Activated CD4-positive, alpha-beta T cell treated with anti-CD3 and anti-CD28 coated beads, Interleukin-2, amount 10 ng/mL, durations not matched to agents 24 days and 14 days (primary cell): ENCODE measurements at regions of chr4 and their contacts with region 1.

Region 1: GRCh38 chr4:107719922-107720722 is at the start of gene PAPSS1:
- DNase-seq: peak; percentile 98
- H3K4me3 Mint-ChIP-seq: peak within 1 kb of the TSS; percentile 91
- H3K27ac Mint-ChIP-seq: peak within 1 kb of the TSS; percentile 91
- H3K4me1 Mint-ChIP-seq: peaks cover 31% of the 10 kb centered on the region
- H3K27me3 Mint-ChIP-seq: no peaks in the 10 kb centered on the region
- total RNA-seq, gene PAPSS1: 31.1 and 31.2 TPM in 2 replicates

Region 2: GRCh38 chr4:106315968-106316772 is 1404.0 kb before region 1 on chr4 and contains the starts of genes AIMP1 and TBCK:
- intact Hi-C with region 1: loop called (anchors 5 kb)
- DNase-seq: peak; percentile 96
- H3K4me3 Mint-ChIP-seq: no peak within 1 kb of the TSS
- H3K27ac Mint-ChIP-seq: peak within 1 kb of the TSS; percentile 87
- H3K4me1 Mint-ChIP-seq: peaks cover 23% of the 10 kb centered on the region
- H3K27me3 Mint-ChIP-seq: no peaks in the 10 kb centered on the region
- total RNA-seq, gene AIMP1: 82.6 and 84.7 TPM in 2 replicates
- total RNA-seq, gene TBCK: 28.1 and 29.5 TPM in 2 replicates

Region 3: DNA sequence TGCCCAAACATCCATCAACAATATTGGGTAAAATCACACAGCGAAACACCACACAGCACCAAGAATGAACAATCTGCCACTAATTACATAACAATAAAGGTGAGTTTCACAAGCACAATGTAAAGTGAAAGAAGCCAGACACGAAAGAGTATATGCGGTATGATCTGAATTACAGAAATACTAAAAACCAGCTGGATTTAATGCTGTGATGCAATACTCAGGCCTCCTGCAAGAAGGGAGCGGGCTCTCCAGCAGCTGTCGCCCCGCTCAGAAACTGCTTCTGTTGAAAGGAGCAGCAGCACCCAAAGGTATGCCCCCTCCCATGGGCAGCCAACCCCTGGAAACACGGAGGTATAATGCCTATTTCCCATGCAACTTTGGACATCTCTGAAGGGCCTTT is 77.1 kb before region 1 on chr4:
- intact Hi-C with region 1: no loop called
- DNase-seq: no peak
- H3K4me3 Mint-ChIP-seq: no peak overlapping the region
- H3K27ac Mint-ChIP-seq: no peak overlapping the region
- H3K4me1 Mint-ChIP-seq: no peaks in the 10 kb centered on the region
- H3K27me3 Mint-ChIP-seq: no peaks in the 10 kb centered on the region

Region 4: DNA sequence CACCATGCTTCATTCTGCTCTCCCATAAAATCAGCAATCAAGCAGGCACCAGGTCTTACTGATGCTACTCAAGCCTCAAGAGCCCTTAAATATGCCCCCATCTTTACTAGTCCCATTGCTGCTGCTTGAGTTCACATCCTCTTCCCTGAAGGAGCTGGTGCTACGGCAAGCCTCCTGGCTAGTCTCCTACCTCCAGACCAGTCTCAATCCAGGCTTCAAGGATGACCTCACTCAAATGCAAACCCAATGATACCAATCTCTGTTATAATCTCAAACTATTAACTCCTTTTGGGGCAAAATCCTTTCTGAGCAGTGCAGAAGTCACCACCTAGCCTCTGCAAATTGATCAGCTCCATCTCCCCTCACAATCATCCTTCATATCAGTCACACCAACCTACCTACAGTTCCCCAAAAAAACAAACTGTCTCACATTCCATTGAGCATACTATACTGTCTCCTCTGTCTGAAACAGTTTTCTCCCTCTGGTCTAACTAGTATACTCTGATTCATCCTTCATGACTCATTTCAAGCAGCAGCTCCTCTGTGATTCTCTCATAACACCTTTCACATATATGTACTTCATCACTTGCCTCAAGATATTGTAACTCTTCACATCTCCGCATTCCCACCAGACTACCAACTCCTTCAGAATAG is 30.1 kb before region 1 on chr4:
- intact Hi-C with region 1: loop called (anchors 2 kb)
- DNase-seq: no peak
- H3K4me3 Mint-ChIP-seq: no peak overlapping the region
- H3K27ac Mint-ChIP-seq: no peak overlapping the region
- H3K4me1 Mint-ChIP-seq: peaks cover 9% of the 10 kb centered on the region
- H3K27me3 Mint-ChIP-seq: no peaks in the 10 kb centered on the region

Region 5: DNA sequence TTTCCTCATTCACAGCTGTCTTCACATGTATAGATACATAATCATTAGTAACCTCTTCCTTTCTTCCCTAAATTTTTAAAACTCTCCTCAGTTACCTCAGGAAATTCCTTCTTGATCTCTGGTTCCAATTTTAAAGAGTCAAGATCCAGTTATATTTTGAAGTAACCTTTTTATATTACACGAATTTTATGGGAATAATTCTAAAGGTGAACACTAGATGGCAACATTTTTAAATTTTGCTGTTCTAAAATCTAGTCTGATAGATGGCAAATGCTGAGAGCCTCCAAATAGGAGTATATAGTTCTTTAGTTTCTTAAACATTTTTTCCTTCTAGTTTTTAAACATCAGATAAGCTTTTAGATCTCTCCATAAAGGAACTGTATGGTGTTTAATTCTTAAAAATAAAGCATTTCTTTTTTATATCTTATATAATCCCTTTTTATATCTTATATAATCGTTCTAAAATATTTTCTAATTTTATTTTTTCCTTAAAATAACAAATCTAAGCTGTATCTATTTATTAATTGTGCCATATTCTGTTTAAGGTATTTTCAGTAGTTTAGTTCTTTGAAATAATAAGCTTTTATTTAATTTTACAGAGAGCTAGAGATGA is 37.8 kb after region 1 on chr4:
- intact Hi-C with region 1: no loop called
- DNase-seq: no peak
- H3K4me3 Mint-ChIP-seq: no peak overlapping the region
- H3K27ac Mint-ChIP-seq: no peak overlapping the region
- H3K4me1 Mint-ChIP-seq: no peaks in the 10 kb centered on the region
- H3K27me3 Mint-ChIP-seq: peaks cover 6% of the 10 kb centered on the region

Region 6: DNA sequence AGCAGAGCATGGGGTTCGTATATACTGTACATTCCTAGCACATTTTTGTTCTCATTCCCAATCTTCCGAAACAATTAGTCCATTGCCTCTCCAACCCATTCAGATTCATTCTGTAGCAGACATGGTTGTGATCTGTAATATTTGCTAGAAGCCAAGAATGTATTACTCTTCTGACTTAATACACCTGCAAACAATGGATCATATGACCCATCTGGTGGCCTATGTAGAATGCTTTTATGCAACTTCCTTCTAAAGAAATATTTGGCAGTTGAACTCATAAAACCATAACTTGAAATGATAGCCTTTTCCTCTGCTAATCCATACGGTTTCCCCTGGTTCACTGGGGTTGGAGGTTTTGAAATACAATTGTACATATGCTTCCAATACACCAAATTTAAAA is 71.8 kb after region 1 on chr4:
- intact Hi-C with region 1: no loop called
- DNase-seq: no peak
- H3K4me3 Mint-ChIP-seq: no peak overlapping the region
- H3K27ac Mint-ChIP-seq: no peak overlapping the region
- H3K4me1 Mint-ChIP-seq: no peaks in the 10 kb centered on the region
- H3K27me3 Mint-ChIP-seq: peaks cover 6% of the 10 kb centered on the region

Region 7: GRCh38 chr4:107922486-107923483 is 202.7 kb after region 1 on chr4:
- intact Hi-C with region 1: no loop called
- DNase-seq: no peak
- H3K4me3 Mint-ChIP-seq: no peak overlapping the region
- H3K27ac Mint-ChIP-seq: no peak overlapping the region
- H3K4me1 Mint-ChIP-seq: no peaks in the 10 kb centered on the region
- H3K27me3 Mint-ChIP-seq: peaks cover 32% of the 10 kb centered on the region

Region 8: DNA sequence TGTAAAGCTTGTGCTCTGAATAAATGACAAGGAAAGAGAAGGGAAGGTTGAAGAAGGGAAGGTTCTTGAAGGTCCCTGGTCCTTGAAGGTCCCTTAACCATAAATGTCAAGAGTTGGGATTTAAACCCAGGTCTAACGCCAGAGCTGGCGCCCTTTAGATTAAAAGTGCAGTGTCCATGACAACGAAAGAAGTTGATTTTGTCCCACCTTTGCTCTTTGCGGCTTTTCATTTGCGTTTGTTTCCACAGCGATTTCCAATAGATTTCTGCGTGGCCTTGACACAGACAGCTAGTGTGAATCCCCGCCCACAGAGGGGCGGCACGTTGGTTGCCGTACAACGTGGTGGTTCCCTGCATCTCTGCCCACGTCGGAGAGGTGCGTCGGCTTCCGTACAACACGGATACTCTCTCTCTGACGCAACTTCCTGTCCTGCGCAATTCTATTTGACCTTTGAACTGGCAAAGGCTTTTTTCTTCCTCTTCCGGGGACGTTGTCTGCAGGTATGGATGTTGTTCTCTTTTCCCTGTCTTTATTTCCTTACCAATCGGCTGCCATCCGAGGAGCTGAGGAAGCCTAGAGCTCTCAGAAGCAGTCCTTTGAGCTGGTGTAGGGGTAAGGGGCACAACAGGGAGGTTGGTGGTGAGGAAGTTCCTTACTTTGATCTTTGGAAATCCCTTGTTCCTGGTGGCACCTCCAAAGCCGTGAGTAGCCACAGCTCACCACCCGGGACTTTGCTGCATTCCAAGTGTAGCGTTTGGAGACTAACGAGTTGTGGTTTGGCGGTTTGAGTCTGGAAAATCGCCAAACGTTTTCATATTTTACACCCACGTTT is 900.2 kb after region 1 on chr4 and contains the start of gene RPL34:
- intact Hi-C with region 1: loop called (anchors 2 kb)
- DNase-seq: peak; percentile 99
- H3K4me3 Mint-ChIP-seq: peak within 1 kb of the TSS; percentile 93
- H3K27ac Mint-ChIP-seq: peak within 1 kb of the TSS; percentile 96
- H3K4me1 Mint-ChIP-seq: peaks cover 40% of the 10 kb centered on the region
- H3K27me3 Mint-ChIP-seq: no peaks in the 10 kb centered on the region
- total RNA-seq, gene RPL34: 1,411 and 1,425 TPM in 2 replicates